Activated naive CD4-positive, alpha-beta T cell treated with anti-CD3 and anti-CD28 coated beads for 36 hours (primary cell): ENCODE measurements at regions of chr3 and their contacts with region 1.

Region 1: GRCh38 chr3:33096093-33096868 is 665 bp downstream of the GLB1 start:
- DNase-seq: peak; percentile 68
- H3K4me3 Mint-ChIP-seq: peak overlapping the region; percentile 98
- H3K27ac Mint-ChIP-seq: peak overlapping the region; percentile 88
- H3K4me1 Mint-ChIP-seq: peaks cover 41% of the 10 kb centered on the region
- H3K27me3 Mint-ChIP-seq: no peaks in the 10 kb centered on the region

Region 2: DNA sequence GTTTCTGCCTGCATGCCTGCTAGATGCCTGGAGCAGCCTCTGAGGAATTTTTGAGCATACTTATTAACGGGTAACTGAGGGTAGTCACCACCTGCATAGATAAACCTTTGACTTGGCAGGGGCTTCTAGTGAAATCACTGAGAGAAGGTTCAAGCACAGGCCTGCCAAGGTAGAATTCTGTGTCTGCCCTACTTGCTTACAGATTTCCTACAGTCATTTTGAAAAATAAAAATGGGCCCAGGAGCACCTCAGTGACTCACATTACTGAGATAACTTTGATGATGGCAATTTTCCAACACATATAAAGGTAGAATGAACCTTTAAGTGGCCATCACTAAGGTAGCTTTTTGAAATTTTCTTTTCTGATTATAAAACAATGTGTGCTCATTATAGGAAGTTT is 28.4 kb after region 1 on chr3:
- CTCF ChIA-PET with region 1: no interaction called
- intact Hi-C with region 1: loop called (anchors 1 kb)
- DNase-seq: peak; percentile 31
- H3K4me3 Mint-ChIP-seq: no peak overlapping the region
- H3K27ac Mint-ChIP-seq: no peak overlapping the region
- H3K4me1 Mint-ChIP-seq: peaks cover 15% of the 10 kb centered on the region
- H3K27me3 Mint-ChIP-seq: no peaks in the 10 kb centered on the region

Region 3: GRCh38 chr3:33525232-33525631 is 429.0 kb after region 1 on chr3:
- CTCF ChIA-PET with region 1: no interaction called
- intact Hi-C with region 1: no loop called
- DNase-seq: no peak
- H3K4me3 Mint-ChIP-seq: no peak overlapping the region
- H3K27ac Mint-ChIP-seq: no peak overlapping the region
- H3K4me1 Mint-ChIP-seq: no peaks in the 10 kb centered on the region
- H3K27me3 Mint-ChIP-seq: no peaks in the 10 kb centered on the region